Activated naive CD8-positive, alpha-beta T cell treated with anti-CD3 and anti-CD28 coated beads, Interleukin-2, amount 10 ng/mL, durations not matched to agents 7 days and 5 days (primary cell): ENCODE measurements at regions of chr11 and their contacts with region 1.

Region 1: GRCh38 chr11:3797329-3798095 is at the start of gene NUP98:
- DNase-seq: peak; percentile 99
- ATAC-seq: peak; percentile 97
- H3K4me3 Mint-ChIP-seq: peak within 1 kb of the TSS; percentile 93
- H3K27ac Mint-ChIP-seq: peak within 1 kb of the TSS; percentile 94
- H3K4me1 Mint-ChIP-seq: peaks cover 35% of the 10 kb centered on the region
- H3K27me3 Mint-ChIP-seq: no peaks in the 10 kb centered on the region
- total RNA-seq, gene NUP98: 91.4 to 96.7 TPM

Region 2: GRCh38 chr11:3764266-3764665 is 33.2 kb before region 1 on chr11:
- POLR2A ChIA-PET with region 1: no interaction called
- DNase-seq: no peak
- ATAC-seq: no peak
- H3K4me3 Mint-ChIP-seq: no peak overlapping the region
- H3K27ac Mint-ChIP-seq: no peak overlapping the region
- H3K4me1 Mint-ChIP-seq: peaks cover 2% of the 10 kb centered on the region
- H3K27me3 Mint-ChIP-seq: no peaks in the 10 kb centered on the region

Region 3: GRCh38 chr11:3781423-3781822 is 16.1 kb before region 1 on chr11:
- POLR2A ChIA-PET with region 1: interaction called, 15 read pairs
- DNase-seq: no peak
- ATAC-seq: no peak
- H3K4me3 Mint-ChIP-seq: peak overlapping the region; percentile 19
- H3K27ac Mint-ChIP-seq: peak overlapping the region; percentile 54
- H3K4me1 Mint-ChIP-seq: peaks cover 40% of the 10 kb centered on the region
- H3K27me3 Mint-ChIP-seq: no peaks in the 10 kb centered on the region

Region 4: GRCh38 chr11:3959015-3959919 is 161.8 kb after region 1 on chr11:
- POLR2A ChIA-PET with region 1: no interaction called
- DNase-seq: no peak
- ATAC-seq: peak; percentile 31
- H3K4me3 Mint-ChIP-seq: no peak overlapping the region
- H3K27ac Mint-ChIP-seq: no peak overlapping the region
- H3K4me1 Mint-ChIP-seq: peaks cover 55% of the 10 kb centered on the region
- H3K27me3 Mint-ChIP-seq: no peaks in the 10 kb centered on the region